Activated CD4-positive, alpha-beta T cell treated with anti-CD3 and anti-CD28 coated beads for 36 hours (primary cell): ENCODE measurements at regions of chr19 and their contacts with region 1.

Region 1: DNA sequence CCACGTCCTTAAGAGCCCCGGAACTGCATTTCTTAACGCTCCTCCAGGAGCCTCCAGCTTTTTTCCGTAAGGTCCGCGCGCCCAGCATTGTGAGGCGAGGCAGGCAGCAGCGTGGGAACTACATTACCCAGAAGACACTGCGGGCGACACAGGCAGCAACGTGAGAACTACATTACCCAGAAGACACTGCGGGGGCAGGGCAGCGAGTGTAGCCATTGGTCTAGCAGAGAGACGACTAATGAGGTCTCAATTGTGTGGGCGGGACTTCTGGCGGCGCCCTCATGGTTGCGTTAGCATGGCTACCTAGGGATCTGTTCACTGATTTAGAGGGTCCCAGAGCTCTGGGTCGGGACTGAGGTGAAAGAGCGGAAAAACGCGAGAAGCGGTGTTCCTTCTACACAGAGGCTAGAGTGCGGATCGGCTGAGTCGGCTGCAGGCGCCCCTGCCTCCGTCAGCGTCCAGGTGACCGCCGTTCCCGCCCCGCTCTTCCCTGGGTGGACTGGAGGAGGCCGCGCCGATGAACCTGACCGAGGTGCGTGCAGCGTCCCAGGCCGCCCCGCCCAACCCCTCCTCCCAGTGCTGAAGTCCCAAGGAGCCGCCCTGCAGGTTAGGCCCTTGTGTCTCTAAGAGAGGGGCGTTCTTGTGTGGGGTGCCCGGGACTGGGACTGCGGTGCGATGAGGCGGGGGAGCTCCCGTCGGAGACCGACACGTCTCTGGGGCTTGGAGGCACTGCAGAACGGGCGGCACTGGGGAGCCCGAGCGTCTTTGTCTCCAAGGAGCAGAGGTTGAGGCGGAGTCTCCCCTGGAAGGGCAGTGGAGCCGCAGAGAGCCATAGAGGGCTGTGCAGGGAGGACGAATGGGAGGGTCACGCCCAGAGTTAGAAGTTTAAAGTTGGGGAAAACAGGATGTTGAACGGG is at the start of gene ZNF749:
- DNase-seq: peak; percentile 97
- ATAC-seq: peak; percentile 98
- H3K4me3 Mint-ChIP-seq: peak within 1 kb of the TSS; percentile 92
- H3K27ac Mint-ChIP-seq: peak within 1 kb of the TSS; percentile 89
- H3K4me1 Mint-ChIP-seq: peaks cover 21% of the 10 kb centered on the region
- H3K27me3 Mint-ChIP-seq: no peaks in the 10 kb centered on the region
- total RNA-seq, gene ZNF749: 10.6 to 17.9 TPM

Region 2: DNA sequence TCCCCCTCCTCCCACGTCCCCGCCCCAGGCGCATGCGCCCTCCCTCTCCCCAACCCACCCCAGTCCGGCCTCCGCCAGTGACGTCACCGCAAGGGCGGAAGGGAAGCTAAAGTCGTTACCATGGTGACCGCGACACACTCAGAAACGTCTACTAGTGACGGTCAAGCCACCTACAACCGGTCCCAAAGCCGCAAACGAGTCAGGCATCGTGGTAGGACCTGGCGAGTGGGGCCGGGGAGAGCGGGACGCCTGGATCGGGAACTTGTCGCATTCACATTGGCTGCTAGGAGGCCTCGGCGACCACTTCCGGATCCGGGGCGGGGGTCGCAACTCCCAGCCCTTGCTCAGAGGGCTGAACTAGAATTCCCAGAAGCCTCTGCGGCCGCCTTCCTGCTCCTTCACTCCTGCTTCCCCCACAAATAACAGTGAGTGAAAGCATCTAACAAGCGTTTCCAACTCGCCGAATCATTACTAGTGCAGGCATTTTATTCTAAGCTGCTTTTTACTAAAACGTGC is 1120.7 kb before region 1 on chr19 and contains the start of gene ZSCAN5A:
- CTCF ChIA-PET with region 1: no interaction called
- POLR2A ChIA-PET with region 1: no interaction called
- intact Hi-C with region 1: loop called in 1 of 2 experiments (anchors 10 kb)
- DNase-seq: peak; percentile 99
- ATAC-seq: peak; percentile 80
- H3K4me3 Mint-ChIP-seq: peak within 1 kb of the TSS; percentile 83
- H3K27ac Mint-ChIP-seq: peak within 1 kb of the TSS; percentile 100
- H3K4me1 Mint-ChIP-seq: peaks cover 23% of the 10 kb centered on the region
- H3K27me3 Mint-ChIP-seq: no peaks in the 10 kb centered on the region
- total RNA-seq, gene ZSCAN5A: 8.3 to 9.9 TPM

Region 3: DNA sequence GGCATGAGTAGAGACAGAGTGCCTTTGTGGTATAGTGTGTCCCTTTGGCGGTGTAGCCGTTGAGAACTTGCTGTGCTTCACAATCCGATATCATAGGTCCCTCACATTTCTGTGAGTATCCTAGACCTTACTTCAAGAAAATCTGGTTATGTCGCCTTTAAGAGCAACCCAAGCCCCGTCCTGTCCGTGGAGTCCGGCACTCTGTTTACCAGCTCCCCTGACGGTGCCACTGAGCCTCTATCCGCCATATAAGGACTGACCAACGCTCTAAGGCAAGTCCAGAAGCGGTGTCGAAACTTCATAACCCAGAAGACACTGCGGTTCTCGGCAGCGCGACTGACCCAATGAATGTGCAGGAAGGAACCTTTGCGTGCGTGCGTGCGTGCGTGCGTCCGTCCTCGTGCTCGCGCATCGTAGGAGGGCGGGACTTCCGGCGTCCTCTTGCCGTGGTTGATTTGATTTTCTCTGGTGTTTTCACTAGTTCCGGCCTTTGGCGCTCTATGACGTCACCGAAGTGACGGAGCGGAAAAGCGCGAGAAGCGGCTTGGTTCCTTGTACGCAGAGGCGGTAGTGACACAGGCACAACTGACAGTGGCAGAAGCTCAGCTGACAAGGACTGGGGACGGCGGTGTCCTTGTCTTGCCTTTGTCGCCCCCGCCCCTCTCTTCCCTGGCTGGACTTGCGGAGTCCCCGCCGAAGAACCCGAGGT is 72.2 kb before region 1 on chr19 and contains the starts of genes TRAPPC2B and ZNF547:
- CTCF ChIA-PET with region 1: no interaction called
- POLR2A ChIA-PET with region 1: no interaction called
- intact Hi-C with region 1: loop called (anchors 1 kb)
- DNase-seq: peak; percentile 99
- ATAC-seq: peak; percentile 98
- H3K4me3 Mint-ChIP-seq: peak within 1 kb of the TSS; percentile 86
- H3K27ac Mint-ChIP-seq: peak within 1 kb of the TSS; percentile 94
- H3K4me1 Mint-ChIP-seq: peaks cover 13% of the 10 kb centered on the region
- H3K27me3 Mint-ChIP-seq: no peaks in the 10 kb centered on the region
- total RNA-seq, gene TRAPPC2B: 3.2 to 6.1 TPM
- total RNA-seq, gene ZNF547: 1.5 to 1.7 TPM

Region 4: GRCh38 chr19:57527136-57527881 is 92.0 kb after region 1 on chr19 and contains the start of gene ZNF549:
- CTCF ChIA-PET with region 1: no interaction called
- POLR2A ChIA-PET with region 1: no interaction called
- intact Hi-C with region 1: loop called (anchors 1 kb)
- DNase-seq: peak; percentile 93
- ATAC-seq: peak; percentile 100
- H3K4me3 Mint-ChIP-seq: peak within 1 kb of the TSS; percentile 82
- H3K27ac Mint-ChIP-seq: peak within 1 kb of the TSS; percentile 84
- H3K4me1 Mint-ChIP-seq: peaks cover 18% of the 10 kb centered on the region
- H3K27me3 Mint-ChIP-seq: no peaks in the 10 kb centered on the region
- total RNA-seq, gene ZNF549: 3.7 to 4.6 TPM

Region 5: GRCh38 chr19:57632987-57633831 is 197.9 kb after region 1 on chr19 and contains the start of gene ZNF211:
- CTCF ChIA-PET with region 1: no interaction called
- POLR2A ChIA-PET with region 1: no interaction called
- intact Hi-C with region 1: loop called in 1 of 2 experiments (anchors 1 kb)
- DNase-seq: peak; percentile 91
- ATAC-seq: peak; percentile 100
- H3K4me3 Mint-ChIP-seq: peak within 1 kb of the TSS; percentile 96
- H3K27ac Mint-ChIP-seq: peak within 1 kb of the TSS; percentile 86
- H3K4me1 Mint-ChIP-seq: peaks cover 19% of the 10 kb centered on the region
- H3K27me3 Mint-ChIP-seq: no peaks in the 10 kb centered on the region
- total RNA-seq, gene ZNF211: 8.9 to 9.5 TPM

Region 6: DNA sequence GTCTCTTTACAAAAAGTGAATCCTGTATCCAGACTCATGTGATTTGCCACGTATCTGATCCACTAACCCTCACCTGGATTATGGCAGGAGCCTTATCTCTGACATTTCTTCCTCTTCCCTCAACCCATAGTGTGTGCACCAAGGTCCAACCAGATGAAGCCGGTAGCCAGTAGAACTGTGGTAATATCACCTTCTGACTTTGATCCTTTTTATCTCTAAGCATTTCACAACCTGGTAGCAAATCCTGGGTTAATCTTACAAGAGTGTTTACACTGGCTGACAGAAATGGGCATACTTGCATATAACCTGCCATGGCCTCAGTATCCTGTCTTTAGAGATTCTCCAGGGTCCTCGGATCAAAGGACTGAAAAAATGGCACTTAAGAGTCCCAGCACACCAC is 479.2 kb after region 1 on chr19:
- CTCF ChIA-PET with region 1: no interaction called
- POLR2A ChIA-PET with region 1: no interaction called
- intact Hi-C with region 1: loop called in 1 of 2 experiments (anchors 1 kb)
- DNase-seq: no peak
- ATAC-seq: no peak
- H3K4me3 Mint-ChIP-seq: no peak overlapping the region
- H3K27ac Mint-ChIP-seq: no peak overlapping the region
- H3K4me1 Mint-ChIP-seq: peaks cover 27% of the 10 kb centered on the region
- H3K27me3 Mint-ChIP-seq: no peaks in the 10 kb centered on the region

Region 7: GRCh38 chr19:58305065-58305931 is 870.0 kb after region 1 on chr19 and contains the start of gene ERVK3-1:
- CTCF ChIA-PET with region 1: no interaction called
- POLR2A ChIA-PET with region 1: no interaction called
- intact Hi-C with region 1: loop called in 1 of 2 experiments (anchors 1 kb)
- DNase-seq: peak; percentile 97
- ATAC-seq: peak; percentile 98
- H3K4me3 Mint-ChIP-seq: peak within 1 kb of the TSS; percentile 99
- H3K27ac Mint-ChIP-seq: peak within 1 kb of the TSS; percentile 100
- H3K4me1 Mint-ChIP-seq: peaks cover 52% of the 10 kb centered on the region
- H3K27me3 Mint-ChIP-seq: no peaks in the 10 kb centered on the region
- total RNA-seq, gene ERVK3-1: 38.6 to 53.6 TPM